Activated T-helper 2 cell treated with anti-CD3 and anti-CD28 coated beads, Interferon-gamma antibody, Interleukin-2, Interleukin-4, amounts not matched to agents 10 μg/mL and 5 μg/mL and 100 μg/mL, durations not matched to agents 14 hours and 24 hours and 36 hours (primary cell): ENCODE measurements at regions of chr2 and their contacts with region 1.

Region 1: DNA sequence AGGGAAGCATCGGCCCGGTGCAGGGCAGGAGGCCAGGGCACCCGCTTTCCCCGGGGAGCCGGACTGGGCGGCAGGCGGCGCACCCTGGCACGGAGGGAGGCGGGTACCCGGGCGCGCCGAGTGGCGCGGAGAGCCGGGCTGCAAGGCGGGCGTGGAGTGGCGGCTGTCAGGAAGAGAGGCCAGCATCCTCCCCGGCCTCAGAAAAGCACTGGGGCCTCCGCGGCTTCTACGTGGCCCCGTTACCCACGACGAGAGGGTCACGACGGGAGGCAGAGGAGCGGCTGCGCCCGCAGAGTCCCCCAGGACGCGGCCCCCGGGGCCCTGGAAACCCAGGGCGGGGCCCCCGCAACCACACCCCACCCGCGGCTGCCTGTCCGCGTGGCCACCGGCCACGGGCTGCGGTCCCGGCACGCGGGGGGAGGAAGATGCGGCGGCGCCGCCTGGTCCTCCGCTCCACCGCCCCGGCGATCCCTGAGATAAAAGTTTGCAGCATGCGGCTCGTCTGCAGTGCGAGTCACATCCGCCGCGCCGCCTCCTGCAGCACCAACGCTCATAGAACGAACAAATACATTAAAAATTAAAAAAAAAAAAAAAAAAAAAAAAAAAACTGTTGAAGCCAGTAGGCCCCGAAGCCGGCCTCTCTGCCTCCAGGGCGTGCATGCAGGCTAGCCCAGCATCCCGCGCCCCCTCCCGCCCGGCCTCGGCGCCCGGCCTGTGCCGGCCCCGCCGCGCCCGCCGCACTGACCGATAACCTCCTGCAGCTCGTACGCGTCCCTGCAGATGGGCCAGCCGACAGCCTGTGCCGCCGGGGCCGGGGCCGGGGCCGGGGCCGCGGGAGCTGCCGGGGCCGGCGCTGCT is 683 bp downstream of the STK39 start:
- DNase-seq: peak; percentile 83
- H3K4me3 Mint-ChIP-seq: peak overlapping the region; percentile 93
- H3K27ac Mint-ChIP-seq: peak overlapping the region; percentile 94
- H3K4me1 Mint-ChIP-seq: peaks cover 42% of the 10 kb centered on the region
- H3K27me3 Mint-ChIP-seq: no peaks in the 10 kb centered on the region

Region 2: GRCh38 chr2:168160897-168161296 is 85.8 kb before region 1 on chr2:
- intact Hi-C with region 1: loop called (anchors 1 kb)
- DNase-seq: no peak
- H3K4me3 Mint-ChIP-seq: no peak overlapping the region
- H3K27ac Mint-ChIP-seq: no peak overlapping the region
- H3K4me1 Mint-ChIP-seq: peaks cover 28% of the 10 kb centered on the region
- H3K27me3 Mint-ChIP-seq: no peaks in the 10 kb centered on the region

Region 3: GRCh38 chr2:168166902-168167510 is 79.7 kb before region 1 on chr2:
- intact Hi-C with region 1: loop called (anchors 1 kb)
- DNase-seq: no peak
- H3K4me3 Mint-ChIP-seq: peak overlapping the region; percentile 22
- H3K27ac Mint-ChIP-seq: peak overlapping the region; percentile 86
- H3K4me1 Mint-ChIP-seq: peaks cover 45% of the 10 kb centered on the region
- H3K27me3 Mint-ChIP-seq: no peaks in the 10 kb centered on the region

Region 4: GRCh38 chr2:168220965-168221819 is 25.5 kb before region 1 on chr2:
- intact Hi-C with region 1: no loop called
- DNase-seq: no peak
- H3K4me3 Mint-ChIP-seq: no peak overlapping the region
- H3K27ac Mint-ChIP-seq: no peak overlapping the region
- H3K4me1 Mint-ChIP-seq: peaks cover 41% of the 10 kb centered on the region
- H3K27me3 Mint-ChIP-seq: no peaks in the 10 kb centered on the region

Region 5: DNA sequence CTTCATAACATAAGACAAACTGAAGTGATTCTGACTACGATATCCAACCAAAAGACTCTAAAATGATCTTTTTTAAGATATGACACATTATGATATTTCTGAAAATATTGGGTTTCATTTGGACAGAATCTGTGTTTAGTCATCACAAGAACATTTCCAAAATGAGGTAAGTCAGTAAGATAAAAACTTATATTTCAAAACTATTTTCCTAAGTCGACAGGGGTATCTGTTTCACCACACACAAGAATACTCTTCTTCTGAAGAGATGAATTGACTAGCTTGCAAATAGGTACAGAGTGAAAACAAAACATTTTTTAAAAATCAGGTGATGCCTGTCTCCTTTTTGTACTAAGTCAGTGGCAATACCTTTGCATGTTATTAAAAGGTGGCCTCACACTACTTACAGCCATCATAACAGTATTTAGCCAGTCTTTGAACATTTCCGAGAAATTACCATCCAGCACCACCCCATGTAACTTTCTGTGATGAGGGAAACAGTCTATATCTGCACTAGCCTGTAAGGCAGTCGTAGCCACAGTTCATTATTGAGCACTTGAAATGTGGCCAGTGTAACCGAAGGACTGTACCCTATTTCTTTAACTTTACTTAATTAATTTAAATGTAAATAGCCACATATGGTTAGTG is 12.8 kb before region 1 on chr2:
- intact Hi-C with region 1: loop called (anchors 1 kb)
- DNase-seq: no peak
- H3K4me3 Mint-ChIP-seq: no peak overlapping the region
- H3K27ac Mint-ChIP-seq: peak overlapping the region; percentile 63
- H3K4me1 Mint-ChIP-seq: peaks cover 35% of the 10 kb centered on the region
- H3K27me3 Mint-ChIP-seq: no peaks in the 10 kb centered on the region

Region 6: GRCh38 chr2:168443818-168444217 is 197.1 kb after region 1 on chr2:
- intact Hi-C with region 1: no loop called
- DNase-seq: no peak
- H3K4me3 Mint-ChIP-seq: no peak overlapping the region
- H3K27ac Mint-ChIP-seq: no peak overlapping the region
- H3K4me1 Mint-ChIP-seq: peaks cover 2% of the 10 kb centered on the region
- H3K27me3 Mint-ChIP-seq: no peaks in the 10 kb centered on the region

Region 7: GRCh38 chr2:168639053-168639898 is 392.6 kb after region 1 on chr2:
- intact Hi-C with region 1: no loop called
- DNase-seq: no peak
- H3K4me3 Mint-ChIP-seq: no peak overlapping the region
- H3K27ac Mint-ChIP-seq: no peak overlapping the region
- H3K4me1 Mint-ChIP-seq: peaks cover 4% of the 10 kb centered on the region
- H3K27me3 Mint-ChIP-seq: no peaks in the 10 kb centered on the region